Mammary epithelial cell (primary cell): ENCODE measurements at regions of chr4 and their contacts with region 1.

Region 1: GRCh38 chr4:51918251-51918650 is 75.3 kb downstream of the DCUN1D4 start:
- DNase-seq: no peak
- H3K4me3 ChIP-seq: no peak overlapping the region
- H3K27ac ChIP-seq: no peak overlapping the region
- H3K4me1 ChIP-seq: peaks cover 9% of the 10 kb centered on the region
- H3K27me3 ChIP-seq: no peaks in the 10 kb centered on the region
- CTCF ChIP-seq: no peak

Region 2: DNA sequence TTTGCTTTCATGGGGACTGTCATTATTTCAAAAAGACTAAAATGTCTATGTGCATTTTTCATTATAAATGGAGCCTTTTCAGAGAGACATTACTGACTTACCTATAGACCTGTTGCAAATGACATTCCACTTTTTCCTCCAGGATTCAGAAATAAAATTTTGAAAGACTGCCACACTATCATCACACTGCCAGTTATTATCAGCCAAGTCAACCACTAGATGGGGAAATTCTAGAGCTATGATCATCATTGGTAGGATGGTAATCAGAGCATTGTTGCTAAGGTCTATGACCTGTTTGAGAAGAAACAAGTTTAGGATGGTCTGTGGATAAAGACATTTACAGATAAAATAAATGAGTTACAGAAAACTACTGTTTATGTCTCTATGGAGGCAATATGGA is 79.4 kb after region 1 on chr4:
- CTCF ChIA-PET with region 1: no interaction called
- dilution Hi-C with region 1: loop called (anchors 5 kb)
- in situ Hi-C with region 1: no loop called
- intact Hi-C with region 1: no loop called
- DNase-seq: no peak
- H3K4me3 ChIP-seq: no peak overlapping the region
- H3K27ac ChIP-seq: no peak overlapping the region
- H3K4me1 ChIP-seq: peaks cover 12% of the 10 kb centered on the region
- H3K27me3 ChIP-seq: no peaks in the 10 kb centered on the region
- CTCF ChIP-seq: peak in 1 of 2 donors; percentile 13